ENCODE measurements at regions of chr15 and their contacts with region 1.

Region 1: GRCh38 chr15:73927476-73928240 is 1.4 kb downstream of the LOXL1 start:
- DNase-seq: peak; percentile 84
- H3K4me3 Mint-ChIP-seq: peak overlapping the region; percentile 72
- H3K27ac Mint-ChIP-seq: no peak overlapping the region
- H3K4me1 Mint-ChIP-seq: peaks cover 33% of the 10 kb centered on the region
- H3K27me3 Mint-ChIP-seq: no peaks in the 10 kb centered on the region

Region 2: GRCh38 chr15:73873889-73874511 is 53.7 kb before region 1 on chr15:
- CTCF ChIA-PET with region 1: interaction called, 12 read pairs
- intact Hi-C with region 1: loop called (anchors 1 kb)
- DNase-seq: peak; percentile 51
- H3K4me3 Mint-ChIP-seq: no peak overlapping the region
- H3K27ac Mint-ChIP-seq: no peak overlapping the region
- H3K4me1 Mint-ChIP-seq: no peaks in the 10 kb centered on the region
- H3K27me3 Mint-ChIP-seq: peaks cover 26% of the 10 kb centered on the region

Region 3: DNA sequence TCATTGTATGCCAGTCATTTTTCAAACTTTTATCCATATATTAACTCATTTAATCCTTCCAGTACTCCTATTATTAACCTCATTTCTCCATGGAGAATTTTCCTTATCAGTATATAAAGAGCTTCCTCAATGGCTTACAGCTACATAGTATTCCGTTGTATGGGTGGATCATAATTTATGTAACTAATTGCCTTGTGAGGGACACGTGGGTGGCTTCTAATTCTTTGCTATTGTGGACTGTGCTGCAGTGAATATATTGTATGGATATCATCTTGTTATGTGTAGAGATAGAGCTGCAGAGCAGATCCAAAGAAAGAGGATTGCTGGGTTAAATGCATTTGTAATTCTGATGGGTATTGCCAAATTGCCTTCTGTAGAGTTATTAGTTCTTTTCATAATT is 92.1 kb after region 1 on chr15:
- CTCF ChIA-PET with region 1: no interaction called
- intact Hi-C with region 1: no loop called
- DNase-seq: no peak
- H3K4me3 Mint-ChIP-seq: no peak overlapping the region
- H3K27ac Mint-ChIP-seq: no peak overlapping the region
- H3K4me1 Mint-ChIP-seq: peaks cover 14% of the 10 kb centered on the region
- H3K27me3 Mint-ChIP-seq: no peaks in the 10 kb centered on the region

Region 4: DNA sequence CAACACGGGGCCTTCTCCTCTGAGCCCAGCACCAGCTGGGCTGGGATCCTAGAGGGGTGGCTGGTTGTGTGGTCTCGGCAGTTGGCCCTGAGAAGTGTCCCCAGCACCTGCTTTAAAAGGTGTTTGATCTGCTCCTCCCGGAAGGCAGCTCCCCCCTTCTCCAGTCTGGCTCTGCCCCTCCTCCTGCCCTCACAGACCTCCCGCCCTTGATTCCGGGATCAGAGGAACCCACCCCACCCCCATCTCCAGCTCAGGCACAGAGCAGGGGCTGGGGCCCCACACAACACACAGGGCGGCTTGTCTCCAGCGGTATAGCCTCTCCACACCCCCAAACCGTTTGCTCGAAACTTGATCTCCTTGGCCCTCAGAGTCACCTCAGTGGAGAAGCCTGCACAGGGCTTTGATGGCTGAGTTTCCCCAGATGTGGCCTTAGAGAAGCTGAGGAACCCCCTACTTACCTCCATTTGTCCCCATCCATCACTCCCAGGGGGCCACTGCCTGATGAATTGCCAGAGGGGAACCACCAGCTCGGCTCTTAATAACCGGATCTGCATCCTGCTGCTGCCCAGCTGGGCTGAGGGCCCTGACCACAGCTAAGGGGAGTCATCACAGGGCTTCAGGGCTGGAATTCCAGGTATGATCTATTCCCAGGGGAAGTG is 281.4 kb after region 1 on chr15:
- CTCF ChIA-PET with region 1: no interaction called
- intact Hi-C with region 1: no loop called
- DNase-seq: no peak
- H3K4me3 Mint-ChIP-seq: no peak overlapping the region
- H3K27ac Mint-ChIP-seq: no peak overlapping the region
- H3K4me1 Mint-ChIP-seq: no peaks in the 10 kb centered on the region
- H3K27me3 Mint-ChIP-seq: no peaks in the 10 kb centered on the region

Measured in activated naive CD4-positive, alpha-beta T cell treated with anti-CD3 and anti-CD28 coated beads for 36 hours (primary cell).